Head of caudate nucleus (tissue), 42 donors: ENCODE measurements at regions of chr6 and their contacts with region 1.

Region 1: DNA sequence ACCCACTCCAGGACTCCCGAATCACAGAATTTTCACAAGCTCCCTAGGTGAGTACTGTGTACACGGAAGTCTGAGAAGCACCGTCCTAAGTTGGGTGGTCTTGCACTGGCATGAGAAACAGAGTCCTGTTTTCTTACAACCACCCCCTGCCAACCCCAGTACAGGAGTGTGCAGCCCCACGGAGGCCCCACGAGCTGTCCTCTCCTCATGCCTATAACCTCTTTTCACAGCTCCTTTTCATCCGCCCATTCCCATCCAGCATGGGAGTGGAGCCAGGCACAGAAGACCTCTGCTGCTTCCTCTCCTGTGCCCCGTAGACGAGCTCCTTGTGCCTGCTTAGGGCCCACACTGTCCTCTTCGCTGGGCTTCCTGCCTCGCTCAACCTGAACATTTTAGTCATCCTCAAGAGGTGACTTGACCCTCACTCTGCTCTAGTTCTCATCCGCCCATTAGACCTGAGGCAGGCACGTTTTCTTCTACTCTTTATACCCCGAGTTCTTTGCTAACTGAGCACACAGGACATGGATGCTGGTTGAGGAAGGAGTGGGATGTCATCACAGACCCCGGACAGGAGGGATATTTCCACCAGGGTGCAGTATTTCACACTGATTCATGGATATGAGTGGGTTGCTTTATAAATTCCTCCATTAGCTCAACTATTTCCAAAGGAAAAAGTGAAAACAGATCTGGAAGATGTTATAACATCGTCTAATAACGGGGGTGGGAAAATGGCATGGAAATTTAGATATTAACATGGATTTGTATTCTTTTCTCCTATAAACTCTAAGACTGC is 160.5 kb downstream of the TTLL2 start:
- DNase-seq: peak in 28 of 42 donors; percentile 23 to 86 (median 58)

Region 2: GRCh38 chr6:167898673-167899311 is 413.4 kb after region 1 on chr6:
- intact Hi-C with region 1: loop called (anchors 5 kb)
- DNase-seq: peak in 1 of 42 donors; percentile 37